GM18951 (cell line): ENCODE measurements at regions of chr10 and their contacts with region 1.

Region 1: GRCh38 chr10:23438550-23439441 is at the start of gene OTUD1:
- POLR2A ChIP-seq: peak; percentile 72

Region 2: GRCh38 chr10:23368816-23369640 is 69.8 kb before region 1 on chr10:
- in situ Hi-C with region 1: loop called (anchors 10 kb)
- POLR2A ChIP-seq: no peak